Natural killer cell (primary cell): ENCODE measurements at regions of chr17 and their contacts with region 1.

Region 1: GRCh38 chr17:81512560-81513371 is at the start of gene ACTG1:
- DNase-seq: peak; percentile 88 to 96
- ATAC-seq: peak; percentile 67 to 88 (median 75)
- H3K4me3 ChIP-seq: peak within 1 kb of the TSS; percentile 74
- H3K4me3 Mint-ChIP-seq: peak within 1 kb of the TSS; percentile 100
- H3K27ac ChIP-seq: peak within 1 kb of the TSS; percentile 91
- H3K27ac Mint-ChIP-seq: peak within 1 kb of the TSS; percentile 95 to 98
- H3K4me1 ChIP-seq: peaks cover 76% of the 10 kb centered on the region
- H3K4me1 Mint-ChIP-seq: peaks cover 54 to 70% of the 10 kb centered on the region in 2 donors
- H3K27me3 ChIP-seq: no peaks in the 10 kb centered on the region
- H3K27me3 Mint-ChIP-seq: no peaks in the 10 kb centered on the region
- CTCF ChIP-seq: no peak
- total RNA-seq, gene ACTG1: 1,401 to 1,901 (median 1,735) TPM

Region 2: DNA sequence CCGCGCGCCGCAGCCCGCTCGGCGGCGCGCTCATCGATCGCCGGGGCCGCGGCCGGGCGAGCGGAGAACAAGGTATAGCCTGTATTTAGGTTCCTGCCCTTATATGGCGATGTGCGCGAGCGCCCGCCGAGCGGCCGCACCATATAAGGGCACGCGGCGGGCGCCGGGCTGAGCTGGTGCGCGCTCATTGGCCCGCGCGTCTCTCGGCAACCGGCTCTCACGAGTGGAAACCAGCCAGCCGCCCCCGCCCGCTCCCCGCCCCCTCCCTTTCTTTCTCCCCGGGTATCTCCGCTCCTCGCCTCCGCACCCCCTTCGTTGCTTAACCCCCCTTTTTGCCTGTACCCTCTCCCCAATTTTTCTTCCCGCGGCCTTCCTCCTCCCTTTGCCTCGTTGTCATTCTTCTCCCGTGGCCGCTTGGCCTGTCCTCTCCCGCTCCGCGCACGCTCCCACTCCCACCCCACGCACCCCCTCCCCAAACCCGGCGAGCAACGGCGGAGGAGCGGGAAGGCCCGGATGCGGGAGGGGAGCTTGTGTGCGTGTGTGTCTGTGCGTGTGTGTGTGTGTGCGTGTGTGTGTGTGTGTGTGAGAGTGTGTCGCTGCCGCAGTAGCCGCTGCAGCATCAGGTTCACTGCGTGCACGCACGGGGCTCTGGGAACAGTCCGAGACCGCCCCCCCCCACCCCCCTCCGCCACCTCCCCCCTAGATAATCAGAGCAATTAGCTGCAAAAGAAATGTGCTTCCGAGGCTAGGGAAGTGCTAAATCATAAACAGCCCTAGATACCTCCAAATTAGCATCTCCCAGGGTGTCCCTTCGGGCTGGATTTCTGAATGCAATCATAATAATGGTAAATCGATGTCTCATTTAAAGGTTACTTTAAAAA is 1702.4 kb before region 1 on chr17:
- intact Hi-C with region 1: loop called (anchors 5 kb)
- DNase-seq: peak; percentile 63 to 91
- ATAC-seq: peak; percentile 89 to 95 (median 94)
- H3K4me3 ChIP-seq: no peak overlapping the region
- H3K4me3 Mint-ChIP-seq: peak overlapping the region; percentile 31
- H3K27ac ChIP-seq: no peak overlapping the region
- H3K27ac Mint-ChIP-seq: peak overlapping the region in 1 of 2 donors; percentile 45
- H3K4me1 ChIP-seq: peaks cover 52% of the 10 kb centered on the region
- H3K4me1 Mint-ChIP-seq: peaks cover 12 to 27% of the 10 kb centered on the region in 2 donors
- H3K27me3 ChIP-seq: peaks cover 81% of the 10 kb centered on the region
- H3K27me3 Mint-ChIP-seq: peaks cover 50 to 54% of the 10 kb centered on the region in 2 donors
- CTCF ChIP-seq: no peak

Region 3: DNA sequence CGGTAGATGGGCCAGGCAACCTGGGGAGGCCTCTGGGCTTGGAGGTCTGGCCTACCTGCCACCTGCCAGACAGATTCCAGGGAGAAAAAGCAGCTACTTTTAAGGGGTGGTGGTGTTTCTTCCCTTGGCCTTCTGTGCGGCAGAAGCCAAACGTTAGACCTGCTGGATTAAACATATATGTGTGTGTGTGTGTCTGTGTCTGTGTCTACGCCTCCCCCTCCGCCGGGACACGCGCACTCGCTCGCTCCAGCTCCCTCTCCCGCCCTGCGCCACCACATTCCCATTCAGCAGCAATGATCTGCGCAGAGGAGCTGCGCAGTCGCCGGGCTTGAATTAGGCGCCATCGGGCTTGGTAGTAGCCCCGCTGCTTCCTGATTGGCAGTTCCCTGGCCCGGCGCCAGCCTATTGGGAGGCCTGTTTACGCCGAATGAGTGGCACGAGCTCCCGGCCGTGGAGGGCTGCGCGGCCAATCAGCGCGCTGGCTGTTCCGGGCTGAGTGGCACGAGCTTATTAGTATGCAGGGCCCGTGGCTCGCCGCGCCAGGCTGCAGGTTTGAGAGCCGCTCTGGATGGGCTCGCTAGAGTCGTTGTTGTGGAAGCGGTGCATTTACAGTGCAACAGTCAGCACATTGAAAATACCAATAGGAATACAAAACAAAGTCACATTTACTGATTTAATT is 117.7 kb before region 1 on chr17 and contains the start of gene BAHCC1:
- intact Hi-C with region 1: loop called (anchors 1 kb)
- DNase-seq: peak; percentile 85
- ATAC-seq: peak; percentile 80 to 89 (median 82)
- H3K4me3 ChIP-seq: peak within 1 kb of the TSS; percentile 16
- H3K4me3 Mint-ChIP-seq: peak within 1 kb of the TSS; percentile 94
- H3K27ac ChIP-seq: no peak within 1 kb of the TSS
- H3K27ac Mint-ChIP-seq: peak within 1 kb of the TSS; percentile 86 to 92
- H3K4me1 ChIP-seq: peaks cover 63% of the 10 kb centered on the region
- H3K4me1 Mint-ChIP-seq: peaks cover 29 to 35% of the 10 kb centered on the region in 2 donors
- H3K27me3 ChIP-seq: peaks cover 48% of the 10 kb centered on the region
- H3K27me3 Mint-ChIP-seq: peaks cover 0 to 37% of the 10 kb centered on the region in 2 donors
- CTCF ChIP-seq: no peak
- total RNA-seq, gene BAHCC1: 2.9 to 17.3 (median 5.7) TPM

Region 4: DNA sequence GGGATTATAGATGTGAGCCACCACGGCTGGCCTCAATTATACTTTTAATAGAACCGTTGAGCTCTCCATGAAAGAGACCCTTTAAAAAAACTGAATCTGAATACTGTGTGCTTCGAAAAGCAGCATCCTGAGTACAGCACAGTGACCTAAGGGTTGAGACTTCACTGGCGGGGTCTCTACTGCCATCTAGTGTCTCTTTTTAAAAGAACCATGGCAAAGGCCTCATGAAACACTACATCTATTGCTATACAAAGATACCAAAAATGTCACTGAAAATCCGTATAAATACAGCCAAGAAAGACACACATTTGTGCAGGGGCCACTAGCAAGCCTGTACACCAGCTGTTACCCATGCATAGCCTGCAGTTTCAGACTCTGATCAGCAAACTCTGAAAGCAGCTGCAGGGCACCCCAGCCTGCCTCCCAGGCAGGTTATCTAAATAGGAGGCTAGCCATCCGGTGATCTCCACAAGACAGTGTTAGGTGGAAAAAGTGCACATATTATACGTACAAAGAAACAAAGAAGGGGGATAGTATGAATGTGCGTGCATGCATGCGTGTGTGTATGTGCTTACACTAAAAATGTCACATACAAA is 88.9 kb after region 1 on chr17:
- intact Hi-C with region 1: loop called (anchors 10 kb)
- DNase-seq: peak in 1 of 2 donors; percentile 81
- ATAC-seq: peak; percentile 87 to 97 (median 95)
- H3K4me3 ChIP-seq: no peak overlapping the region
- H3K4me3 Mint-ChIP-seq: no peak overlapping the region
- H3K27ac ChIP-seq: no peak overlapping the region
- H3K27ac Mint-ChIP-seq: peak overlapping the region; percentile 8 to 50
- H3K4me1 ChIP-seq: peaks cover 3% of the 10 kb centered on the region
- H3K4me1 Mint-ChIP-seq: peaks cover 7 to 20% of the 10 kb centered on the region in 2 donors
- H3K27me3 ChIP-seq: no peaks in the 10 kb centered on the region
- H3K27me3 Mint-ChIP-seq: no peaks in the 10 kb centered on the region
- CTCF ChIP-seq: peak; percentile 89